ENCODE measurements at regions of chr20 and their contacts with region 1.

Region 1: DNA sequence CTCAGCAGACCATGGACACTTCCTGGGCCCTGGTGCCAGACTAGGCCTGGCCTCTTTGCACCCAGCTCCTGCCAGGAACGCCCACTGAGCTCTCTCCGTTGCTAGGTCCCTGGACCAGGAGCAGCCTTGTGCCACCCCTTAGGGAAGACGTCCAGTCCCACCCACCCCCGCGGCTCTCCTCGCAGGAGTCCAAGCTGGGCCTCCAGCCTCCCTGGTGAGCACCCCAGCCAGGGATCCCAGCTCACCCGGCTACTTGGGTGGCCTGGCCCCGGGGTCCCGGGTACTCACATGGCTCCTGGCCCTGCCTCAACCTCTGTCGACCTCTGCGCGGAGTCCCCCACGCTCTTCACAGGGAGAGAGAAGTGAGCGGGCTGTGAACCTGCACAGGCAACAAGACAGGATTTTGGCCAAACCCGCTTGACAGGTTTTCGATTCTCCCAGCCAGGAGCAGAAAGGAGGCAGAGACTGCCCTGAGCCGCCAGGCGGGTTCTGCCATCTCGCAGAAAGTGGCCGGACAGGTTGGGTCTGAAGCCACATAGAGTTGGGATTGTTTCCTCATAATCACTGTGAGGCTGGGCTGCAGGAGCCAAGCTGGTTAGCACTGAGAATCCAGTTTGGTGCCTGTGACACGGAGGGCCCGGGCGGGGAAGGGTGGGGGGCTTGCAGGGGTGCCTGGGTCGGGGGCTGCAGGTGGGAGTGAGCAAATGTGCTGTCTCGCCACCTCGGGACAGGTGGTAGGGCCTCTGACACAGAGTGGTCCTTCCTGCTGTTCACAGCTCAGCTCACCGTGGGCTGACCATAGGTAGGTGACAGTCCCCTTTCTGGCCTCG is at the start of gene RBBP8NL:
- DNase-seq: peak; percentile 92
- H3K4me3 ChIP-seq: no peak within 1 kb of the TSS
- H3K27ac ChIP-seq: no peak within 1 kb of the TSS
- H3K4me1 ChIP-seq: peaks cover 16% of the 10 kb centered on the region
- H3K27me3 ChIP-seq: no peaks in the 10 kb centered on the region
- CTCF ChIP-seq: peak; percentile 31 to 76
- total RNA-seq, gene RBBP8NL: 0.14 TPM in 1 of 2 donors, not detected in the other

Region 2: DNA sequence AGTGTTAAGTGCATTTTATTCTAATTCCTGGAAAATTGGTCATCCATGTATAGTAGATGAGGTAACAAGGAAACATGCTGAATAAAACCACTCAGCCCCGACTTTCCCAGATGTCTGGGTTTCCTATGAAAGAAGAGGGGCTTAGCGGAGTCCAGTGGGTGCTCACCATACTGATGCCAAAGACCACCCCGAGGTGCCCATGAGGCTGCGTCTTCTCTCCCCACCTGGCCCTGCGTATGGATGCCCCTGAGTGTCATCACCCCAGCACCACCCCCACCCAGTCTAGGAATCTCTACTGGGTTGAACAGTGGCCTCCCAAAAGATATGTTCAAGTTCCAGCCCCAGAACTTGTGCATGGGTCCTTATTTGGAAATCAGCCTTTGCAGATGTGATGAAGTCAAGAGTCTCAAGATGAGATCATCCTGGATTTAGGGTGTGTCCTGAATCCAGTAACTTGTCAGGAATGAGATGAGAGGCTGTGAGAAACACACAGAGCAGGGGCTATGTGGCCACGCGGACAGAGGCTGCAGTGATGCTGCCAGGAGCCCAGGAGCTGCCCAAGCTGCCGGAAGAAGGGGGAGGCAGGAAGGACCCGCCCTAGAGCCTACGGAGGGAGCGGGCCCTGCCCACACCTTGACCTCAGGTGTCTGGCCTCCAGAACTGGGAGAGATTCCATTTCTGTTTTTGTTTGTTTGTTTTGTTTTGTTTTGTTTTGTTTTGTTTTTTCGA is 1299.9 kb before region 1 on chr20:
- CTCF ChIA-PET with region 1: no interaction called
- dilution Hi-C with region 1: no loop called
- in situ Hi-C with region 1: no loop called
- intact Hi-C with region 1: no loop called
- DNase-seq: peak; percentile 74
- H3K4me3 ChIP-seq: no peak overlapping the region
- H3K27ac ChIP-seq: no peak overlapping the region
- H3K4me1 ChIP-seq: no peaks in the 10 kb centered on the region
- H3K27me3 ChIP-seq: no peaks in the 10 kb centered on the region
- CTCF ChIP-seq: no peak

Region 3: DNA sequence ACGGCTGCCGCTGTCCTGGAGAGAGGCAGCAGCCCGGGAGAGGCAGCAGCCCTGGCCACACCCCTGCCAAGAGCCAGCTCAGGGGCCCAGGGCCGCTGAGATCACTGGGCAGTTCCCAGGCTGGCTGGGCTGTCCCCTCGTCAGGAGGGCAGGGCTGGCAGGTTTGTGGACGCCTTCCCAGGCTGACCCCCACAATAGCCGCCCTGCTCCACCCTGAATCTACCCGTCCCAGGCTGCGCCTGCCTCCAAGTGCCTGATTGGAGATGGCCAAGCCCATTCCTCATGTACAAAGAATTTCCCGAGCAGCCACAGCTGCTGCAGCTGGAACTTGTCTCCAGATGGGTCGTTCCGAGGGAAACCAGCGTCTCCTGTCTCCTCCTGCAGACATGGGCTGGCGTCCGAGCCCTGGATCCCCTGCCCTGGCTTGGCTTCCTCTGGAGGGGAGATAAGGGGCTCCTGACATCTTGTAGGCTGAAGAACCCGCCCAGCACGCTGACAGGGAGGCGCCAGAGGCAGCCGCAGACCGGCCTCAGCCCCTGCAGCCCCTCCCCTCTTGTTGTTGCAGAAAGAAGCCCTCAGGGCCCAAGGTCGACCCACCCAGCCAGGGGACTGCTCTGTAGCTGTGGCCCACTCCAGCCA is 57.8 kb after region 1 on chr20:
- CTCF ChIA-PET with region 1: no interaction called
- dilution Hi-C with region 1: loop called (anchors 5 kb)
- in situ Hi-C with region 1: no loop called
- intact Hi-C with region 1: loop called (anchors 5 kb)
- DNase-seq: no peak
- H3K4me3 ChIP-seq: no peak overlapping the region
- H3K27ac ChIP-seq: no peak overlapping the region
- H3K4me1 ChIP-seq: peaks cover 14% of the 10 kb centered on the region
- H3K27me3 ChIP-seq: peaks cover 10% of the 10 kb centered on the region
- CTCF ChIP-seq: no peak

Region 4: DNA sequence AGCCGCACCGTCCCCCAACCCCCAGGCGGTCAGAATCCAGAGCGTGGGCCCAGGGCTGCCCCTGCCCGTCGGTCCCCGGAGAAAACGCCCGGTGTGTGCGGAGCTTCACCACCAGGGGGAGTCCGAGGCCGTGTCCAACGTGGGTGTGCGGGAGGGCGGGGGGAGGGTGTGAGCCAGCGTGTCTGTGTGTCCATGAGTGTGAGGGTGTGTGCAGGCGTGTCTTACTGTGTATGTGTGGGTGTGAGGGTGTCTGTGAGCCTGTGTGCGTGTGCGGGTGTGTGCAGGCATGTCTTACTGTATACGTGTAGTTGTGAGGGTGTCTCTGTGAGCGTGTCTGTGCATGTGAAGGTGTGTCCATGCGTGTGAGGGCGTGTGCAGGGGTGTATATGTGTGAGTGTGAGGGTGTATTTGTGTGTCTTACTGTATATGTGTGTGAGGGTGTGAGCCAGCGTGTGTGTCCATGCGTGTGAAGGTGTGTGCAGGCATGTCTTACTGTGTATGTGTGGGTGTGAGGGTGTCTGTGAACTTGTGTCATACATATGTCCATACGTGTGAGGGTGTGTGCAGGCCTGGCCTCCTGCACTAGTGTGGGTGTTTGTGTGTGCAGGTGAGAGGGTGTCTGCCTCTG is 73.0 kb after region 1 on chr20:
- CTCF ChIA-PET with region 1: no interaction called
- dilution Hi-C with region 1: no loop called
- in situ Hi-C with region 1: no loop called
- intact Hi-C with region 1: loop called (anchors 2 kb)
- DNase-seq: peak; percentile 29
- H3K4me3 ChIP-seq: no peak overlapping the region
- H3K27ac ChIP-seq: no peak overlapping the region
- H3K4me1 ChIP-seq: peaks cover 9% of the 10 kb centered on the region
- H3K27me3 ChIP-seq: no peaks in the 10 kb centered on the region
- CTCF ChIP-seq: peak; percentile 56 to 86

Measured in mammary epithelial cell (primary cell).